Activated naive CD4-positive, alpha-beta T cell treated with anti-CD3 and anti-CD28 coated beads, Interleukin-2, amount 10 ng/mL, durations not matched to agents 7 days and 5 days (primary cell): ENCODE measurements at regions of chr14 and their contacts with region 1.

Region 1: GRCh38 chr14:73741386-73741875 is 27.2 kb upstream of the PNMA1 start:
- DNase-seq: peak; percentile 87
- H3K4me3 Mint-ChIP-seq: peak overlapping the region; percentile 74
- H3K27ac Mint-ChIP-seq: peak overlapping the region; percentile 91
- H3K4me1 Mint-ChIP-seq: peaks cover 80% of the 10 kb centered on the region
- H3K27me3 Mint-ChIP-seq: no peaks in the 10 kb centered on the region

Region 2: DNA sequence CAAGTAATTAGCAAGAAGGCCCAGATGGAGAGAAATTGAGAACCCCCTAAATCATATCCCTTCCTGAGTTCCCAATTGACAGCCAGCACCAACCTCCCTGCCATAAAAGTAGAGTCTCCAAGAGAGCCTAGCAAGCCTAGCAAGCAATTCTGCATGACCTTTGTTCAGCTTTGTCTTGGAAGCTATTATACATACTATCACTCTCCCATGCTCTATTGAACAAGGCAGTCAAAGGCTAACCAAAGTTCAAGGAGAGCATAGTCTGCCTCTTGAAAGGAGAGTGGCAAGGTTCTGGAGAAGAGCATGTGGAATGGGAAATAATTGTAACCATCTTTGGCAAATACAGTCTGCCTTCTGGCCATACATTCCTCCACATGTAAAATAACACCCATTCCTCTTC is 141.9 kb before region 1 on chr14:
- CTCF ChIA-PET with region 1: no interaction called
- DNase-seq: no peak
- H3K4me3 Mint-ChIP-seq: no peak overlapping the region
- H3K27ac Mint-ChIP-seq: no peak overlapping the region
- H3K4me1 Mint-ChIP-seq: peaks cover 4% of the 10 kb centered on the region
- H3K27me3 Mint-ChIP-seq: peaks cover 13% of the 10 kb centered on the region

Region 3: DNA sequence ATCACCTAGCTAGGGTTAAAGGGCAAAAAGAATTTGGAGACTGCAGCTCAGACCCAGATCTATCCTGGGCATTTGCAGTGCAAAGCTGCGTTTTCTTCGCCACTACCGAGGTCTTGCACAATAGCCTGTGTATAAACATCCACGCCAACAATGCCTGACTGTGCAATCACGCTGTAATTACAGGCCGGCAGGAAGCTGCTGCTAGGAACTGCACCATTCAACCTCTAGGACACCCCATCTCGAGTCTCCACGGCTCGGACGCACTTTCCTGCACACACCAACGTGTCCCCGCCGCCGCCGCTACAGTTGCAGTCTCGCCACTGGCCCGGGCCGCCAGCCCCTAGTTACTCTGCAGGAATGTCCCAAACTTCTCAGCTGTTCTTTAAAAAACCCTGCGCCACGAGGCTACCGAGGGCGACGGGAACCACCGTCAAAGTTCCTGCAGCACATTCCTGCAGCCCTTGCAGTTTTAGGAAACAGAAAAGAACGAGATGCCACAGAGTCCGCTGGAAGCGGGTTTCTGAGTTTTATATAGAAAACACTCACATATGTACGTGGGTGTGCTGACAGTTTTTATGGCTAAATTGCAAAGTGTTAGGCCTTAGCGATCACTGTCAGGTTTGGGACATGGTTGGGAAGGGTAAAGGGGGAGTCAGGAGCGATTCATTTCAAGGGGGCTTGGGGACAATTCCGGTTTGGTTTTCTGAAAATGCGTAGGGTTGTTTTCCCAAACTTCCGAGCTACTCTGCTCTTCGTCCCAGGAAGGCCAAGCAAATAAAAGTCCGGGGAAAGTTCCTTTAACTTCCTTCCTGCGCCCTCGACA is 44.7 kb after region 1 on chr14:
- CTCF ChIA-PET with region 1: interaction called, 10 read pairs
- DNase-seq: peak; percentile 83
- H3K4me3 Mint-ChIP-seq: peak overlapping the region; percentile 91
- H3K27ac Mint-ChIP-seq: peak overlapping the region; percentile 96
- H3K4me1 Mint-ChIP-seq: peaks cover 61% of the 10 kb centered on the region
- H3K27me3 Mint-ChIP-seq: no peaks in the 10 kb centered on the region

Region 4: GRCh38 chr14:73825551-73826188 is 84.2 kb after region 1 on chr14:
- CTCF ChIA-PET with region 1: interaction called, 18 read pairs
- DNase-seq: peak; percentile 85
- H3K4me3 Mint-ChIP-seq: no peak overlapping the region
- H3K27ac Mint-ChIP-seq: no peak overlapping the region
- H3K4me1 Mint-ChIP-seq: peaks cover 8% of the 10 kb centered on the region
- H3K27me3 Mint-ChIP-seq: peaks cover 18% of the 10 kb centered on the region